ENCODE measurements at regions of chr12 and their contacts with region 1.

Region 1: GRCh38 chr12:123905319-123905925 is 67.2 kb downstream of the CCDC92 start:
- DNase-seq: peak; percentile 54 to 67
- H3K4me3 ChIP-seq: no peak overlapping the region
- H3K27ac ChIP-seq: no peak overlapping the region
- H3K4me1 ChIP-seq: no peaks in the 10 kb centered on the region
- H3K27me3 ChIP-seq: peaks cover 57% of the 10 kb centered on the region
- CTCF ChIP-seq: peak; percentile 85

Region 2: GRCh38 chr12:123843912-123844748 is 61.3 kb before region 1 on chr12:
- CTCF ChIA-PET with region 1: no interaction called
- POLR2A ChIA-PET with region 1: interaction called, 14 read pairs
- intact Hi-C with region 1: no loop called
- DNase-seq: no peak
- H3K4me3 ChIP-seq: no peak overlapping the region
- H3K27ac ChIP-seq: no peak overlapping the region
- H3K4me1 ChIP-seq: no peaks in the 10 kb centered on the region
- H3K27me3 ChIP-seq: peaks cover 81% of the 10 kb centered on the region
- CTCF ChIP-seq: no peak

Region 3: GRCh38 chr12:123877968-123878367 is 27.5 kb before region 1 on chr12:
- CTCF ChIA-PET with region 1: no interaction called
- POLR2A ChIA-PET with region 1: no interaction called
- intact Hi-C with region 1: no loop called
- DNase-seq: no peak
- H3K4me3 ChIP-seq: no peak overlapping the region
- H3K27ac ChIP-seq: no peak overlapping the region
- H3K4me1 ChIP-seq: no peaks in the 10 kb centered on the region
- H3K27me3 ChIP-seq: peaks cover 99% of the 10 kb centered on the region
- CTCF ChIP-seq: no peak

Region 4: DNA sequence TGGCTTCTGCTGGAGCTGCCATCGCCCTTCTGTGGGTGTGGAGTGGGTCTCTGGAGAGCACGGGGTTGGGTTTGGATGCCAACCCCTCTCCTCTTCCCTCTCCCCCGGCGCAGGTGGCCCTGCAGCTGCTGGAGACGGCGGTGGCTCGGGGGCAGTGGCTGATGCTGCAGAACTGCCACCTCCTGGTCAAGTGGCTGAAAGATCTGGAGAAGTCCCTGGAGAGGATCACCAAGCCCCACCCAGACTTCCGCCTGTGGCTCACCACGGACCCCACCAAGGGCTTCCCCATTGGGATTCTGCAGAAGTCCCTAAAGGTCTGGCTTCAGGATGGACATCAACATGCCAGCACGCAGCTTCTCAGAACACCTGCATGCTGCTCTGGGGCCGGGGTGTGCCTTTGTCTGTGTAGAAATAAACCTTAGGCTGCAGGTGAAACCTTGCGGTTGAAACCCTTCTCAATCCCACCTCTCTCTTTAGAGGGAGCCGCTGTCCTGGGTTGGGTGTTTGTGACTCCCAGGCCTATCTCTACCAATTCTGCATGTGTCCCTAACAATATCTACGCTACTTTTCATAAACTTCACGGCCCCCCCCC is 22.9 kb after region 1 on chr12:
- CTCF ChIA-PET with region 1: interaction called, 16 read pairs
- POLR2A ChIA-PET with region 1: no interaction called
- intact Hi-C with region 1: no loop called
- DNase-seq: no peak
- H3K4me3 ChIP-seq: no peak overlapping the region
- H3K27ac ChIP-seq: no peak overlapping the region
- H3K4me1 ChIP-seq: no peaks in the 10 kb centered on the region
- H3K27me3 ChIP-seq: peaks cover 88% of the 10 kb centered on the region
- CTCF ChIP-seq: no peak

Region 5: GRCh38 chr12:123972457-123973401 is 67.3 kb after region 1 on chr12 and contains the starts of genes CCDC92 and ZNF664:
- CTCF ChIA-PET with region 1: no interaction called
- POLR2A ChIA-PET with region 1: no interaction called
- intact Hi-C with region 1: loop called (anchors 2 kb)
- DNase-seq: peak; percentile 69 to 95
- H3K4me3 ChIP-seq: peak within 1 kb of the TSS; percentile 85
- H3K27ac ChIP-seq: no peak within 1 kb of the TSS
- H3K4me1 ChIP-seq: peaks cover 20% of the 10 kb centered on the region
- H3K27me3 ChIP-seq: no peaks in the 10 kb centered on the region
- CTCF ChIP-seq: no peak
- total RNA-seq, gene CCDC92: 24.8 and 28.0 TPM in 2 replicates
- total RNA-seq, gene ZNF664: 66.3 and 87.6 TPM in 2 replicates

Region 6: DNA sequence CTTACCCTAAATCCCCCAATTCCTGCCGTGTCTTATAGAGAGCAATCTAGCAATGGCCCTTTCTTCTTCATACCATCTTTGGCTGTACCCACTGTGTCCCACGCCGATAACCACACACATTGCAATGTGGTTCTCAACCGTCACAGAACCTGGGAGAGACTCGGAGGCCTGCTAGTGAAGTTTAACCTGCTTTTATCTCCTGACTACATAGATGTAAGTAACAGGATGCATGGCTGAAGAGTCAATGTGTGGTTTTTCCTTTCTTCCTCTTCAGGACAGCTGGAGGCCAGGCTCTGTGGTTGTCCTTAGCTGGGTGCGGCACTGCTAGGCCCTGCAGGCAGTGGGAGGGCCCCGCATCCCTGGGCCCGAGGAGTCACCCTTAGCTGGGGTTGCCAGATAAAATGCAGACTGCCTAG is 118.8 kb after region 1 on chr12:
- CTCF ChIA-PET with region 1: no interaction called
- POLR2A ChIA-PET with region 1: no interaction called
- intact Hi-C with region 1: loop called (anchors 5 kb)
- DNase-seq: peak; percentile 48 to 85
- H3K4me3 ChIP-seq: no peak overlapping the region
- H3K27ac ChIP-seq: peak overlapping the region; percentile 68
- H3K4me1 ChIP-seq: peaks cover 36% of the 10 kb centered on the region
- H3K27me3 ChIP-seq: no peaks in the 10 kb centered on the region
- CTCF ChIP-seq: no peak

Measured in PC-9 (cell line).